ENCODE measurements at regions of chr3 and their contacts with region 1.

Region 1: DNA sequence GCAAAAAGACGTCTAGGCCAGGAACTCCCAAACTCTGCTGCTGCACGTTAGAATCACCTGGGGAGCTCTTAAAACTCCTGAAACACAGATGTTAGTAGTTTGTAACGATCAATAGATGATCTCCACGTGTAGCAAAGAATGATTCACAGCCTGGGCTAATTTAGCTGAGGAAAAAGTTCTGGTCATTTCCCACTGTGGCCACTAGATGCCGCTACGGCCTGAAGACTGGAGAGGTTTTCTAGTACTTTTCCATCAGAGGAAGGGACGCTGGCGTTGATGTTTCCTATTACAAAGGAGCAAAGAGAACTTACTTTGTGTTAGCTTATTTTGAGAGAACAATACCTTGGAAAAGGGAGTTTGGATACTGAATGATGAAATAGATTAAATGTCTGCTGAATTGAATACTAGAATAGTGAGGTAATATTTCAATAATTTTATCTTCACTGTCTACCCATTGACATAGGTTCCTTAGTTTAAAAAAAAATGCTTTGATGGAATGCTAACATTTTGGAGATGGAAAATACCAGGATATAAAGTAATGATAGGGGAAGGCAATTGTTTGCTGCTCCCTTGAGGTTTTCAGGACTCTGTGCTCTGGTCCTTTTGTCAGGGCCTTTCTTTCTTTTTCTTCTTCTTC is 159.1 kb downstream of the P3H2 start:
- DNase-seq: peak; percentile 72
- ATAC-seq: peak; percentile 72
- H3K4me3 Mint-ChIP-seq: no peak overlapping the region
- H3K27ac Mint-ChIP-seq: no peak overlapping the region
- H3K4me1 Mint-ChIP-seq: no peaks in the 10 kb centered on the region
- H3K27me3 Mint-ChIP-seq: peaks cover 4% of the 10 kb centered on the region

Region 2: DNA sequence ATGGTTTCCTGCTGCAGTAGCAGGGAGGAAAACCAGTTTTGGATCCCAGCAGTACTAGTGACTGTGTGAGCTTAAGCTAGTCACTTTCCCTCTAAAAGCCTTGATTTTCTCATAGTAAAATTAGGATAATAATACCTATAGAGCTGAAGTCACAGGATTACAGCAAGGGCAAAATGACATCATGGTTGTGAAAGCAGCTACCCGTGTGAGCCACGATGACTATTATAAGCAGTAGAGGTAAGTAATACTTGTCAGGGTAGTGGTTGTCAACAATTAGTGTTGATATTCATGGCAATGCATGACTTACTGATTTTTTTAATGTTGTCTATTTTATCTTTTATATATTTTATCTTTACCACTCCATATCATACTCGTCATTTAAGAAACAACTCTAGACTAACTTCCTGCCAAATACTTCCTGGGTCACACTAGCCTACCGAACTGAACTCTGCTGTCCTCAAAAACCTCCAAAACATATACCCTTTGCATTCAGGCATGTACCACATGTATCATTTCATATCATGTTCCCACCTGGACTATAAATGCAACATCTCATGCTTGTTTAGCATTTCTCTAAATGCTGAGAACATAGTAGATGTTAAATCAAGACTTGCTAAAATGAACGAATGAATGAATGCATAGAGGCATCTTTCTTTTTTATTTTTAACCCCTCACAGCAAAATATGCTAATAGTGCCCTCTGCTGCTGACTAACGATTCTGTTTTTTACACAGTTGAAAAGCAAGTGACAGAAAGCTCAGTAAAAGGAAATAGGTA is 13.5 kb before region 1 on chr3:
- CTCF ChIA-PET with region 1: interaction called, 33 read pairs
- POLR2A ChIA-PET with region 1: no interaction called
- DNase-seq: no peak
- ATAC-seq: no peak
- H3K4me3 Mint-ChIP-seq: no peak overlapping the region
- H3K27ac Mint-ChIP-seq: no peak overlapping the region
- H3K4me1 Mint-ChIP-seq: peaks cover 2% of the 10 kb centered on the region
- H3K27me3 Mint-ChIP-seq: peaks cover 3% of the 10 kb centered on the region

Region 3: GRCh38 chr3:189974359-189974758 is 12.7 kb after region 1 on chr3:
- CTCF ChIA-PET with region 1: interaction called, 25 read pairs
- POLR2A ChIA-PET with region 1: no interaction called
- DNase-seq: no peak
- ATAC-seq: no peak
- H3K4me3 Mint-ChIP-seq: no peak overlapping the region
- H3K27ac Mint-ChIP-seq: no peak overlapping the region
- H3K4me1 Mint-ChIP-seq: no peaks in the 10 kb centered on the region
- H3K27me3 Mint-ChIP-seq: peaks cover 1% of the 10 kb centered on the region

Region 4: GRCh38 chr3:190197346-190197763 is 235.7 kb after region 1 on chr3:
- CTCF ChIA-PET with region 1: interaction called, 27 read pairs
- POLR2A ChIA-PET with region 1: no interaction called
- DNase-seq: no peak
- ATAC-seq: no peak
- H3K4me3 Mint-ChIP-seq: no peak overlapping the region
- H3K27ac Mint-ChIP-seq: no peak overlapping the region
- H3K4me1 Mint-ChIP-seq: no peaks in the 10 kb centered on the region
- H3K27me3 Mint-ChIP-seq: peaks cover 4% of the 10 kb centered on the region

Region 5: GRCh38 chr3:190205739-190206138 is 244.1 kb after region 1 on chr3:
- CTCF ChIA-PET with region 1: interaction called, 27 read pairs
- POLR2A ChIA-PET with region 1: no interaction called
- DNase-seq: no peak
- ATAC-seq: no peak
- H3K4me3 Mint-ChIP-seq: no peak overlapping the region
- H3K27ac Mint-ChIP-seq: no peak overlapping the region
- H3K4me1 Mint-ChIP-seq: no peaks in the 10 kb centered on the region
- H3K27me3 Mint-ChIP-seq: peaks cover 9% of the 10 kb centered on the region

Region 6: GRCh38 chr3:190321789-190322603 is 360.4 kb after region 1 on chr3 and contains the start of gene CLDN1:
- CTCF ChIA-PET with region 1: interaction called, 20 read pairs
- POLR2A ChIA-PET with region 1: no interaction called
- DNase-seq: peak; percentile 77
- ATAC-seq: peak; percentile 98
- H3K4me3 Mint-ChIP-seq: peak within 1 kb of the TSS; percentile 66
- H3K27ac Mint-ChIP-seq: no peak within 1 kb of the TSS
- H3K4me1 Mint-ChIP-seq: peaks cover 9% of the 10 kb centered on the region
- H3K27me3 Mint-ChIP-seq: peaks cover 40% of the 10 kb centered on the region
- total RNA-seq, gene CLDN1: not detected

Region 7: GRCh38 chr3:190424478-190425439 is 463.1 kb after region 1 on chr3:
- CTCF ChIA-PET with region 1: interaction called, 23 read pairs
- POLR2A ChIA-PET with region 1: no interaction called
- DNase-seq: peak; percentile 34
- ATAC-seq: peak; percentile 39
- H3K4me3 Mint-ChIP-seq: no peak overlapping the region
- H3K27ac Mint-ChIP-seq: no peak overlapping the region
- H3K4me1 Mint-ChIP-seq: peaks cover 4% of the 10 kb centered on the region
- H3K27me3 Mint-ChIP-seq: no peaks in the 10 kb centered on the region

Measured in activated CD8-positive, alpha-beta T cell treated with anti-CD3 and anti-CD28 coated beads, Interleukin-2, amount 10 ng/mL, durations not matched to agents 7 days and 5 days (primary cell).